Activated CD4-positive, alpha-beta T cell treated with anti-CD3 and anti-CD28 coated beads, Interleukin-2, amount 10 ng/mL, durations not matched to agents 24 days and 14 days (primary cell): ENCODE measurements at regions of chr12 and their contacts with region 1.

Region 1: DNA sequence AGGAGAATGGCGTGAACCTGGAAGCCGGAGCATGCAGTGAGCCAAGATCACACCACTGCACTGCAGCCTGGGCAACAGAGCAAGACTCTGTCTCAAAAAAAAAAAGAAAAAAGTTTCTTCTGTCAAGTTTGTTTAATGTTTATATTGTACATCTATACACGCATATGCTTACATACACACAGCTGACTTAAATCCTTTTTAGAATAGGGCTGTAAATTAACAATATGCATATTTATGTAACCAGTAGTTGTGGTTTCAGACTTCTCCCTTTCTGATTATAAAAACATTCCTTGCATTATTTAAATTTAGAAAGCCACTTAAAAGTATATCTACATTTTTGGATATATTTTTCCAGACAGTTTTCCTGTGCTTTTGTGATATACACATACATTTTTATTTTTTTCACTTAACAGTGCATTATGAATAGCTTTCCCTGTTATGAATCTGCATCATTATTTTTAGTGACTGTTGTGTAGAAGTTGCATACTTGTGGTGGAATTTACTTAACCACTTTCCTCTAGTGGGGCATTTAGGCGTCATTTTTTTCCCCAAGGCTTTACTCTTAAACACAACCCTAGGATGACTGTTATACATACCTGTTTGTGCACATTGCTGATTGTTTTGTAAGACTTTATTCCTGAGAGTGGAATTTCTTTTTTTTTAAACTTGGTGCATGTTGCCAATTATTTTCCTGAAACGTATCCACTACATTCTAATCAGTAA is 29.4 kb downstream of the POLR3B start:
- DNase-seq: no peak
- H3K4me3 Mint-ChIP-seq: no peak overlapping the region
- H3K27ac Mint-ChIP-seq: no peak overlapping the region
- H3K4me1 Mint-ChIP-seq: peaks cover 7% of the 10 kb centered on the region
- H3K27me3 Mint-ChIP-seq: no peaks in the 10 kb centered on the region

Region 2: GRCh38 chr12:106841510-106842302 is 454.7 kb after region 1 on chr12:
- intact Hi-C with region 1: loop called (anchors 1 kb)
- DNase-seq: peak; percentile 70
- H3K4me3 Mint-ChIP-seq: no peak overlapping the region
- H3K27ac Mint-ChIP-seq: no peak overlapping the region
- H3K4me1 Mint-ChIP-seq: peaks cover 6% of the 10 kb centered on the region
- H3K27me3 Mint-ChIP-seq: no peaks in the 10 kb centered on the region

Region 3: DNA sequence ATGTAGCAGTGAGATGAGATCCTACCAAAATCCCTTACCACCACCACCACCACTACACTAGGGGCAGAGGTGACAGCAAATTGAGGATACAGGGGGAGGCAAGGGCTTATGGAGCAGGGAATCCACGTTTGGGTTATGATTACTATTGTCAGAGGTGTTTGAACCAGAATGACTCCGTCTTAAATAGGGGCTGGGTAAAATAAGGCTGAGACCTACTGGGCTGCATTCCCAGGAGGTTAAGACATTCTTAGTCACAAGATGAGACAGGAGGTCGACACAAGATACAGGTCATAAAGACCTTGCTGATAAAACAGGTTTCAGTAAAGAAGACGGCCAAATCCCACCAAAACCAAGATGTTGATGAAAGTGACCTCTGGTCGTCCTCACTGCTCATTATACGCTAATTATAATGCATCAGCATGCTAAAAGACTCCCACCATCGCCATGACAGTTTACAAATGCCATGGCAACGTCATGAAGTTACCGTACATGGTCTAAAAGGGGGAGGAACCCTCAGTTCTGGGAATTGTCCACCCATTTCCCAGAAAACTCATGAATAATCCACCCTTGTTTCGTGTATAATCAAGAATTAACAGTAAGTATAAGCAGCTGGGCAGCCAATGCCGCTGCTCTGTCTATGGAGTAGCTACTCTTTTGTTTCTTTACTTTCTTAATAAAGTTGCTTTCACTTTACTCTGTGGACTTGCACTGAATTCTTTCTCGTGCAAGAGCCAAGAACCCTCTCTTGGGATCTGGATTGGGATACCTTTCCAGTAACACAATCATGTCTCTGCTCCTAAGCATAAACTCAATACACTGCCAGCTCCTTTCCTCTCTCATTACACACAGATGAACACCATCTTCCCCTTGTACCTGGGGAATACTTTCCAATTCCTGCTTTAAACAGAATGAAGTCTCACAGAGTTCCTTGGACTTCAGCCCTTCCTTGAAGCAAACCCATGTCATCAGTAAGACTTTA is 723.1 kb after region 1 on chr12:
- intact Hi-C with region 1: loop called (anchors 10 kb)
- DNase-seq: no peak
- H3K4me3 Mint-ChIP-seq: no peak overlapping the region
- H3K27ac Mint-ChIP-seq: no peak overlapping the region
- H3K4me1 Mint-ChIP-seq: peaks cover 2% of the 10 kb centered on the region
- H3K27me3 Mint-ChIP-seq: peaks cover 30% of the 10 kb centered on the region